ENCODE measurements at regions of chr20 and their contacts with region 1.

Region 1: DNA sequence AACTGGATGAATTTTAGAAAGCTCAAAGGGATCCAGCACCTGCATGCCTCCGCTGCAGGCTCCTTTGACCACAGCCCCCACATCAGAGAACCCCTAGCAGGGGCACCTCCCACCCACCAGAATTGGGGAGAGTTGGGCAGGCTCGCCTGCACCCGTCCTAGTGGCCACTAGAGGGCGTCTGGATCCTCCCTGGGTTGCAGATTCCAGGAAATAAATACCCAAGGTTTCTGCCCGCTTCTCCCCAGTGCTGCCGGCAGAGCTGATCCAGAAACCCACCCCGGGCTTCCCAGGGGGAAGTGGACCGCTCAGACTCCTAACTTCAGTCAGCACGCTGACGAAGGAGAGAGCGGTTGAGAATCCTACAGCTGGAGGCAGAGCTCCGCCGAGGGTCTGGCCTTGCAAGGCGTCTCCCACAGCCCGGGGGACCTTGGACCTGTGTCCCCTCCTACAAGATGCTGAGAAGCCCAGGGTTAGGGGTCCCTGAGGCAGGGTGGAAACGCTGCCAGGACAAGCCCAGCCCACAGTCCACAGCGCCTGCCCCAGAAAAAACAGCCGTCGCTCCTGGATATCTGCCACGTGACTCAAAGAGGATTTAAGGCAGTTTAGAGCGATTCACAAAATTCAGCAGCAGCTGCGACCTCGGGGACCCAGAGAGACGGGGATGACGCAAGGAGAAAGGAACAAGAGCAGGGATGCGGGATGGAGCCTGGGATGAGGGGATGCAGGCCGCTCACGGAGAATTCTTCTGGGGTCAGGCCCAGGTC is 32.6 kb upstream of the PHACTR3 start:
- DNase-seq: peak; percentile 71
- ATAC-seq: peak; percentile 78
- H3K4me3 Mint-ChIP-seq: peak overlapping the region; percentile 16
- H3K27ac Mint-ChIP-seq: no peak overlapping the region
- H3K4me1 Mint-ChIP-seq: no peaks in the 10 kb centered on the region
- H3K27me3 Mint-ChIP-seq: peaks cover 26% of the 10 kb centered on the region

Region 2: DNA sequence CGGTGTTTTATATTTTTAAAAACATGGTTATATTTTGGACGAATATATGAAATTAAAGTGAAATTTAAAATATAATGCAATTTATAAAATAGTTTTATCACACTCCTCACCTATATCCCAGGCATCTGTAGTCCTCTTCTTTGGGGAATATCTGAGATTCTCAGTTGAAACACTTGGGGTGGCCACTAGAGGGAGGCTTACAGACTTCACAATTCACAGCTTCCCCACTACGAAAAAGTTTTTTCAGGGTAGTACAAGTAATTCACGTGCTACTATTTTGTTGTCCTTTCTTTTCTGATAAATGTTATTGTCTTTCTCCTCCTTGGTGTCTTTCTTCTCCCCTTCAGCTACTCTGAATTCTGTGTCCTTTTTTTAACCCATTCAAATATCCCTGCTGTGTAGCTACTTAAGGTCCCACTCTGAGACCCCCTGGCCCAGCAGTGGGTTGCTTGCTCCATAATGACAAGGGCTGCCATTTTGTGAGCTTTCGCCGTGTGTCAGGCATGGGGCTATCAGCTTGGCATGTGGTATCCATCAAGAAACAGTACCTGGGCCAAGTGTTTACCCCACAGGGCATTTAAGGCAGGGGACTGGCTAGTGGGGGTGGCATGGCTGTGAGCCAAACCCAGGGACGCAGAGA is 11.0 kb before region 1 on chr20:
- CTCF ChIA-PET with region 1: interaction called, 43 read pairs
- POLR2A ChIA-PET with region 1: no interaction called
- DNase-seq: no peak
- ATAC-seq: no peak
- H3K4me3 Mint-ChIP-seq: no peak overlapping the region
- H3K27ac Mint-ChIP-seq: no peak overlapping the region
- H3K4me1 Mint-ChIP-seq: no peaks in the 10 kb centered on the region
- H3K27me3 Mint-ChIP-seq: no peaks in the 10 kb centered on the region

Region 3: DNA sequence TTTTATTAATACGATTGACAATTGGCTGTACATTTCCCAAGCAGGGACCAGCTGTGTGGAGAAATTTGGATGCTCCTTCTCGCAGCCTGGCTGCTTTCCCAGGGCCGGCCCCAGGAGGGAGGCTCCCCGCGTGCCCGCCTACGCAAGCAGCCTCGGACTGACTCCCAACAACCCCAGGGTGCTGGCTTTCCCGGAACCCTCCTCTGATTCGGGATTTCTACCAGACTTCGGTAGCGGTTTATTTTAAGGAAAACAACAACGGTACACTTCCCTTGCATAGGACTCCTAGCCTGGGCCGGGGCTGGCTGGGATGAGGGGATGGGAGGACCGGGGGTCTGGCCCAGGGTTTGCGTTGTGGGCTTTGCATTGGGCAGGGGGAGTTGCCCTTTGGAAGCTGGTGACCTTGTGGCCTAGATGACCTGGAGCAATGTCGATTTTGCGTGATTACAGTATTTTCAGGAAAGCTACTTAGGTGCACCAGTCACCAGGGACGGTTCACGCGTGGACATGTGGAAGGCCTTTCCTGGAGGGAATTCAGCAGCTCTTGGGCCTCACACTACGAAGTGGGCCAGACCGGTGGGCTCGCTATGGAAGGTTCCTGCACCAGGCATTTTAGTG is 11.8 kb after region 1 on chr20:
- CTCF ChIA-PET with region 1: interaction called, 17 read pairs
- POLR2A ChIA-PET with region 1: no interaction called
- DNase-seq: no peak
- ATAC-seq: no peak
- H3K4me3 Mint-ChIP-seq: no peak overlapping the region
- H3K27ac Mint-ChIP-seq: no peak overlapping the region
- H3K4me1 Mint-ChIP-seq: peaks cover 18% of the 10 kb centered on the region
- H3K27me3 Mint-ChIP-seq: peaks cover 19% of the 10 kb centered on the region

Region 4: GRCh38 chr20:59598625-59599310 is 27.0 kb after region 1 on chr20:
- CTCF ChIA-PET with region 1: interaction called, 24 read pairs
- POLR2A ChIA-PET with region 1: no interaction called
- DNase-seq: peak; percentile 59
- ATAC-seq: peak; percentile 80
- H3K4me3 Mint-ChIP-seq: no peak overlapping the region
- H3K27ac Mint-ChIP-seq: no peak overlapping the region
- H3K4me1 Mint-ChIP-seq: no peaks in the 10 kb centered on the region
- H3K27me3 Mint-ChIP-seq: peaks cover 45% of the 10 kb centered on the region